Activated B cell treated with CpG ODN at 0.5 μM for 24 hours (primary cell): ENCODE measurements at regions of chr12 and their contacts with region 1.

Region 1: DNA sequence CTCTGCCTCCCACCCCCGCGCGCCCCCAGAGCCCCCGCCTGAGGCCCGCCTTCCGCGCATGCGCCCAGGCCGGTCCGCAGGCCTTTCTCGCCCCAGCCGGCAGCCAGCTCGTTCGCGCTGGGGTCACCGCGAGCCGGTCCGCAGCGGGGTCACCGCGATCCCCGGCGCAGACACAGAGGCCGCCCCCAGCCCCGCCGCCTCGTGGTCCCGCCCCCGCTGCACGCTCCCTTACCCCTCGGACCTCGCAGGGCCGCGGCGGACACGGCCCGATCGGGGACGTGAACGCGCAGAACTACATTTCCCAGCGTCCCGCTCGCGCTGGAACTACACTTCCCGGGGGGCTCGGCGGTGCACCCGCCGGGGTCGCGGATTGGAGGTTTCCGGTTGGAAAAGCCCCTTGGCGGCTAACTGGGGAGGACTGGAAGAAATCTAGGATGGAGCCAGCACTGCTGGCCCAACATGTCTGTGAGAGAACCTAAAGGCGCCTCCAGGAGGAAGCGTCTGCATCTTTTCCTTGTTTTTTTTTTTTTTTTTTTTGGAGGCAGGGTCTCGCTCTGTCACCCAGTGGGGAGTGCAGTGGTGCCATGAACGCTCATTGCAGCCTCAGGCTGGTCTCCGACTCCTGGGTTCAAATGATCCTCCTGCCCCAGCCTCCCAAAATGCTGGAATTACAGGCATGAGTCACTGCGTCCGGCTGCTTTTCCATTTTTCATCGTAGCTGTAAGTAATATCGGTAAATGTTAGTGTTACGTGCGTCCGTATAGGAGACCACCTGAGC is at the start of gene ZNF605:
- DNase-seq: peak; percentile 87
- ATAC-seq: peak; percentile 89
- H3K4me3 Mint-ChIP-seq: peak within 1 kb of the TSS; percentile 96
- H3K27ac Mint-ChIP-seq: peak within 1 kb of the TSS; percentile 93
- H3K4me1 Mint-ChIP-seq: peaks cover 33% of the 10 kb centered on the region
- H3K27me3 Mint-ChIP-seq: no peaks in the 10 kb centered on the region
- CTCF ChIP-seq: no peak
- total RNA-seq, gene ZNF605: 12.2 and 15.4 TPM in 2 replicates

Region 2: GRCh38 chr12:132734206-132734605 is 222.0 kb before region 1 on chr12:
- CTCF ChIA-PET with region 1: no interaction called
- POLR2A ChIA-PET with region 1: no interaction called
- intact Hi-C with region 1: no loop called
- DNase-seq: no peak
- ATAC-seq: no peak
- H3K4me3 Mint-ChIP-seq: no peak overlapping the region
- H3K27ac Mint-ChIP-seq: no peak overlapping the region
- H3K4me1 Mint-ChIP-seq: no peaks in the 10 kb centered on the region
- H3K27me3 Mint-ChIP-seq: no peaks in the 10 kb centered on the region
- CTCF ChIP-seq: no peak

Region 3: GRCh38 chr12:132812631-132813305 is 143.4 kb before region 1 on chr12:
- CTCF ChIA-PET with region 1: no interaction called
- POLR2A ChIA-PET with region 1: no interaction called
- intact Hi-C with region 1: no loop called
- DNase-seq: no peak
- ATAC-seq: no peak
- H3K4me3 Mint-ChIP-seq: no peak overlapping the region
- H3K27ac Mint-ChIP-seq: peak overlapping the region; percentile 56
- H3K4me1 Mint-ChIP-seq: peaks cover 6% of the 10 kb centered on the region
- H3K27me3 Mint-ChIP-seq: no peaks in the 10 kb centered on the region
- CTCF ChIP-seq: no peak

Region 4: DNA sequence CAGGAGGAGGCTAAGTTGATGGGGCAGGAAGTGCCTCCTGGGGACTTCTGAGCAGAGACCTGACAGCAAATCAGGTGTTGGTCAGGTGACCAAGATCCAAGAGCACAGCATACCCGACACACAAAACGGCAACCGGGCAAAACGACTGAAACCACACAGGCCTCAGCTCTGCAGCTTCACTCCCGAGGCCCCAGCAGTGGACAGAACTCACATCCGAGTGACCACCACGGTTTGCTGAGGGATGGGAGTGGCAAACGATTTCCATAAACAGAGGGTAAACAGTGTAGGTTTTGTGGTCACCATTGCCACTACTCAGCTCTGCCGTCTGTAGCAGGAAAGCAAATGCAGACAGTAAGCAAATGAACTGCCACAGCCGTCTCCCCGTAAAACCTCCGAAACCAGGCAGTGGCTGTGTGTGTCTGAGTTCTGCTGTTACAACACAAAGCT is 83.2 kb before region 1 on chr12:
- CTCF ChIA-PET with region 1: no interaction called
- POLR2A ChIA-PET with region 1: no interaction called
- intact Hi-C with region 1: no loop called
- DNase-seq: no peak
- ATAC-seq: no peak
- H3K4me3 Mint-ChIP-seq: no peak overlapping the region
- H3K27ac Mint-ChIP-seq: no peak overlapping the region
- H3K4me1 Mint-ChIP-seq: peaks cover 3% of the 10 kb centered on the region
- H3K27me3 Mint-ChIP-seq: no peaks in the 10 kb centered on the region
- CTCF ChIP-seq: no peak

Region 5: GRCh38 chr12:132908145-132909044 is 47.8 kb before region 1 on chr12:
- CTCF ChIA-PET with region 1: no interaction called
- POLR2A ChIA-PET with region 1: interaction called, 9 read pairs
- intact Hi-C with region 1: loop called (anchors 1 kb)
- DNase-seq: peak; percentile 91
- ATAC-seq: peak; percentile 90
- H3K4me3 Mint-ChIP-seq: peak overlapping the region; percentile 94
- H3K27ac Mint-ChIP-seq: peak overlapping the region; percentile 96
- H3K4me1 Mint-ChIP-seq: peaks cover 13% of the 10 kb centered on the region
- H3K27me3 Mint-ChIP-seq: peaks cover 2% of the 10 kb centered on the region
- CTCF ChIP-seq: no peak

Region 6: DNA sequence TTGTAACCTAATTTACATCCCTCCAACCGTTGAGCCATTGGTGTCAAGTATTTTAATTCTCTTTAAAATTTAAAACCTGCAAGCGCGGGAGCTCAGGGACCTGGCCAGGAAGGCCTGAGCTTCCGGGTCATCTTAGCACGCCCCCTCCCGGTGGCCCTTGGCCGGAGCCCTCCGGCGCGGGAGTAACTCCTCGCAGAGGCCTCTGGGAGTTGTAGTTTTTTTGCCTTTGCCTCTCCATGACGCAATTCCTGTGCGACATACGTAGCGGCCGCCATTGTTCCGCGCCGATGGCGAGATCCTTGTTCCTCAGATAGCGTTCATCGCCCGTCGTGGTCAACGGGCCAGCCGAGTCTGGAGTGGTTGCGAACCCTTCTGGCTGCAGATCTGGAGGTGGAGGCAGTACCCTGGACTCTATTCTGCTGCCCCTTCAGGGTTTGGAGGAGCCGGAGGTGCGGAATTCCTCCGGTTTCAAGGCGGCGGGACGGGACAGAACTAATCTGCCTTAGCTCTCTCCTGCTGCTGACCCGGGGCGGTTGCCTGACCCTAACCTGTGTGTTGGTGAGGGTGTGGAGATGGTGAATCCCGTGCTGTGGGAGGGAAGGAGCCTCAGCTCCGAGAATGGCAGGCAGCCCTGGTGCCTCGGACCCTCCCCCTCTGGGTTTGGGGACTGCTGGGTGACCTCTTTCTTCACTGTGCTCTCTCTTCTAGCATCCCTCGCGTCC is 225.2 kb after region 1 on chr12 and contains the start of gene ZNF268:
- CTCF ChIA-PET with region 1: interaction called, 3 read pairs
- POLR2A ChIA-PET with region 1: no interaction called
- intact Hi-C with region 1: loop called (anchors 1 kb)
- DNase-seq: peak; percentile 86
- ATAC-seq: peak; percentile 97
- H3K4me3 Mint-ChIP-seq: peak within 1 kb of the TSS; percentile 94
- H3K27ac Mint-ChIP-seq: peak within 1 kb of the TSS; percentile 89
- H3K4me1 Mint-ChIP-seq: peaks cover 20% of the 10 kb centered on the region
- H3K27me3 Mint-ChIP-seq: no peaks in the 10 kb centered on the region
- CTCF ChIP-seq: no peak
- total RNA-seq, gene ZNF268: 29.1 and 29.3 TPM in 2 replicates